ENCODE measurements at regions of chr10 and their contacts with region 1.

Region 1: DNA sequence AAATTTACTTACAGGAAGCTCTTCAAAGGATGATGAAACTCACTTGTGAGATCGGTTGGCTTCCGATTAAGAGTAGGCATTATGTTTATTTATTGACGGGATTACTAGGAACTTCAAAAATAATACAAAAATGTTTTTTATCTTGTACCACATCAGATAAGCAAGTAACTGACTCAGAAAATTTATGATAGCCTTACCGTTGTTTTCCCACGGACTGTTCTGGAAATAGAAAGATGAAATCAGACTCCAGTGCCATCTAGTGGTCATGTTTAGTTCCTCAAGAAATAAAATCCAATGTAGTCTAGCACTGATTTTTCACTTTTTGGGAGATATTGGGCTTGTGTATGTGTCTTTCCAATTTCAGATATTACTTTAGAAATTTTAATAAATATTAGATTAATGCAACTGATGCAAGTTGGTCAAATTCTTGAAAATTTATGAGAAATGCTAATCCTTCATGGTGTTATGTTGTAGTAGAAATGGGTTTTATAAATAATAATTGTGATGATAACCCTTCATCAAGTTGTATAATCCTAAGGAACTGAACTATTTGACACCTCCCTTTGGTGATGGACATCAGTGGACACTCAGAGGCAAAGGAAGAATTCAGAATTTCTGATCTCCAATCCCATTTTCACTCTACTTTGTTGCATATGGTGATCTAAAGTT is 168.8 kb downstream of the TMEM26 start:
- DNase-seq: peak in 6 of 9 donors; percentile 7 to 43 (median 26)
- ATAC-seq: peak; percentile 45
- H3K4me3 ChIP-seq: no peak overlapping the region
- H3K4me3 Mint-ChIP-seq: peak overlapping the region in 9 of 10 donors; percentile 12 to 81 (median 66)
- H3K27ac ChIP-seq: no peak overlapping the region
- H3K27ac Mint-ChIP-seq: peak overlapping the region in 1 of 9 donors; percentile 7
- H3K4me1 ChIP-seq: peaks cover 9 to 12% of the 10 kb centered on the region in 2 donors
- H3K4me1 Mint-ChIP-seq: peaks cover 13 to 24% (median 20%) of the 10 kb centered on the region in 7 donors
- H3K27me3 ChIP-seq: no peaks in the 10 kb centered on the region
- H3K27me3 Mint-ChIP-seq: peaks cover 0 to 22% (median 0%) of the 10 kb centered on the region in 5 donors

Region 2: DNA sequence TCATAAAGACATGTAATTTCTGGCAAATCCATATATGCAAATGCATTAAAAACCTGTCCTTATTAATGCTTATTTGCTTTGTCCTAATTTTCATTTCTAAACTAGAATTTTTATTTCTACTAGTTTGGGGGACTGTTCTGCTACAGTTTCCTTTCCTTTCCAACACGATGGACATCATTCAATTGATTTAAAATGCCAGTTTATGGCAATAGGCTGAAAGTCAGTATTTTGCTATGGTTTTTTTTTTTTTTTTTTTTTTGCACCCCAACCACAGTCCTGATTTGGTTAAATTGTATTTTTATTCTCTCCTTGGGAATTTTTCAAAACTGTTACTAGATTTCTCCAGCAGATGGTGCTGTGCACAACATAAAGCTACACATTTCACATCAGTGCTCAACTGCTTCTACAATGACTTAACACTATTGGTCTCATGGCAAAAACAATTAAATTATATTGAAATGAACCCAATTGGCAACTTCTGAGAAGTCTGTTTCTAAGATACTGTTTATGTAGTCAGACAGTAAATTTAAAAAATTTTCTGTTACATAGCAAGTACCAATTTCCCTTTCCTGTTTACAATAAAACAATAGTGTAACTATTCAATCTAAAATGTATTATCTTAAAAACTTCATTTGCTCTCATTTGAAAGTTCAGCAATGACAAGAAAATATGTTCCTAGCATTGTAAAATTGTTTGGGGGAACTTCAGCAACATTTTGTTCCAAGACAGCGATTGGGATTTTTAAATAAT is 1184.2 kb before region 1 on chr10:
- CTCF ChIA-PET with region 1: no interaction called
- POLR2A ChIA-PET with region 1: no interaction called
- intact Hi-C with region 1: loop called in 1 of 2 experiments (anchors 2 kb)
- DNase-seq: peak in 6 of 9 donors; percentile 14 to 43 (median 31)
- ATAC-seq: peak; percentile 69
- H3K4me3 ChIP-seq: no peak overlapping the region
- H3K4me3 Mint-ChIP-seq: no peak overlapping the region
- H3K27ac ChIP-seq: no peak overlapping the region
- H3K27ac Mint-ChIP-seq: no peak overlapping the region
- H3K4me1 ChIP-seq: no peaks in the 10 kb centered on the region
- H3K4me1 Mint-ChIP-seq: no peaks in the 10 kb centered on the region
- H3K27me3 ChIP-seq: no peaks in the 10 kb centered on the region
- H3K27me3 Mint-ChIP-seq: no peaks in the 10 kb centered on the region

Region 3: GRCh38 chr10:60816628-60817397 is 467.5 kb before region 1 on chr10:
- CTCF ChIA-PET with region 1: no interaction called
- POLR2A ChIA-PET with region 1: no interaction called
- intact Hi-C with region 1: loop called (anchors 1 to 2 kb)
- DNase-seq: peak in 7 of 9 donors; percentile 12 to 63 (median 40)
- ATAC-seq: peak; percentile 83
- H3K4me3 ChIP-seq: no peak overlapping the region
- H3K4me3 Mint-ChIP-seq: no peak overlapping the region
- H3K27ac ChIP-seq: no peak overlapping the region
- H3K27ac Mint-ChIP-seq: no peak overlapping the region
- H3K4me1 ChIP-seq: no peaks in the 10 kb centered on the region
- H3K4me1 Mint-ChIP-seq: peaks cover 0 to 9% (median 5%) of the 10 kb centered on the region in 7 donors
- H3K27me3 ChIP-seq: no peaks in the 10 kb centered on the region
- H3K27me3 Mint-ChIP-seq: peaks cover 0 to 26% (median 0%) of the 10 kb centered on the region in 5 donors

Region 4: GRCh38 chr10:61140765-61141392 is 143.5 kb before region 1 on chr10:
- CTCF ChIA-PET with region 1: no interaction called
- POLR2A ChIA-PET with region 1: no interaction called
- intact Hi-C with region 1: loop called (anchors 1 to 2 kb)
- DNase-seq: peak in 4 of 9 donors; percentile 9 to 38 (median 13)
- ATAC-seq: peak; percentile 54
- H3K4me3 ChIP-seq: no peak overlapping the region
- H3K4me3 Mint-ChIP-seq: no peak overlapping the region
- H3K27ac ChIP-seq: no peak overlapping the region
- H3K27ac Mint-ChIP-seq: no peak overlapping the region
- H3K4me1 ChIP-seq: no peaks in the 10 kb centered on the region
- H3K4me1 Mint-ChIP-seq: peaks cover 0 to 2% (median 0%) of the 10 kb centered on the region in 7 donors
- H3K27me3 ChIP-seq: no peaks in the 10 kb centered on the region
- H3K27me3 Mint-ChIP-seq: peaks cover 0 to 18% (median 9%) of the 10 kb centered on the region in 5 donors

Region 5: DNA sequence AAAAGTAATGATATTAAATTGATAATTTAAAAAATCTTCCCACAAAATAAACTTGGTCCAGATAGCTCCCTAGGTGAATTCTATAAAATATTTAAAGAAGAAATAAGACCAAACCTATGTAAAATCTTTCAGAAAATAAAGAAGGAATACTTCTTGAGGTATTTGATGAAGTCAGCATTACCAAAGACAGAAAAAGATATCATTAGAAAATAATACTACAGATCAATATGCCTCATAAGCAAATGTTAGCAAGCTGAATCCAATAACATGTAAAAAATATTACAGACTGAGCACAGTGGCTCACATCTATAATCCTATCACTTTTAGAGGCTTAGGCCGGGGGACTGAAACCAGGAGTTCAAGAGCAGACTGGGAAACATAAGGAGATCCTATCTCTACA is 138.8 kb after region 1 on chr10:
- CTCF ChIA-PET with region 1: no interaction called
- POLR2A ChIA-PET with region 1: no interaction called
- intact Hi-C with region 1: no loop called
- DNase-seq: no peak
- ATAC-seq: no peak
- H3K4me3 ChIP-seq: no peak overlapping the region
- H3K4me3 Mint-ChIP-seq: no peak overlapping the region
- H3K27ac ChIP-seq: no peak overlapping the region
- H3K27ac Mint-ChIP-seq: no peak overlapping the region
- H3K4me1 ChIP-seq: no peaks in the 10 kb centered on the region
- H3K4me1 Mint-ChIP-seq: no peaks in the 10 kb centered on the region
- H3K27me3 ChIP-seq: no peaks in the 10 kb centered on the region
- H3K27me3 Mint-ChIP-seq: peaks cover 0 to 3% (median 0%) of the 10 kb centered on the region in 5 donors

Region 6: GRCh38 chr10:61987951-61988379 is 703.6 kb after region 1 on chr10:
- CTCF ChIA-PET with region 1: no interaction called
- POLR2A ChIA-PET with region 1: no interaction called
- intact Hi-C with region 1: loop called in 1 of 2 experiments (anchors 5 kb)
- DNase-seq: peak in 7 of 9 donors; percentile 3 to 49 (median 21)
- ATAC-seq: peak; percentile 78
- H3K4me3 ChIP-seq: no peak overlapping the region
- H3K4me3 Mint-ChIP-seq: peak overlapping the region; percentile 8 to 86 (median 62)
- H3K27ac ChIP-seq: peak overlapping the region; percentile 30
- H3K27ac Mint-ChIP-seq: peak overlapping the region; percentile 64 to 98 (median 80)
- H3K4me1 ChIP-seq: peaks cover 25 to 27% of the 10 kb centered on the region in 2 donors
- H3K4me1 Mint-ChIP-seq: peaks cover 43 to 79% (median 76%) of the 10 kb centered on the region in 7 donors
- H3K27me3 ChIP-seq: no peaks in the 10 kb centered on the region
- H3K27me3 Mint-ChIP-seq: no peaks in the 10 kb centered on the region

Measured in naive thymus-derived CD4-positive, alpha-beta T cell (primary cell).